Activated CD4-positive, alpha-beta T cell treated with anti-CD3 and anti-CD28 coated beads for 36 hours (primary cell): ENCODE measurements at regions of chr4 and their contacts with region 1.

Region 1: GRCh38 chr4:77075869-77076799 is at the start of gene CCNI:
- DNase-seq: peak; percentile 95
- ATAC-seq: peak; percentile 77
- H3K4me3 Mint-ChIP-seq: no peak within 1 kb of the TSS
- H3K27ac Mint-ChIP-seq: peak within 1 kb of the TSS; percentile 99
- H3K4me1 Mint-ChIP-seq: peaks cover 45% of the 10 kb centered on the region
- H3K27me3 Mint-ChIP-seq: no peaks in the 10 kb centered on the region
- total RNA-seq, gene CCNI: 226 to 230 TPM

Region 2: DNA sequence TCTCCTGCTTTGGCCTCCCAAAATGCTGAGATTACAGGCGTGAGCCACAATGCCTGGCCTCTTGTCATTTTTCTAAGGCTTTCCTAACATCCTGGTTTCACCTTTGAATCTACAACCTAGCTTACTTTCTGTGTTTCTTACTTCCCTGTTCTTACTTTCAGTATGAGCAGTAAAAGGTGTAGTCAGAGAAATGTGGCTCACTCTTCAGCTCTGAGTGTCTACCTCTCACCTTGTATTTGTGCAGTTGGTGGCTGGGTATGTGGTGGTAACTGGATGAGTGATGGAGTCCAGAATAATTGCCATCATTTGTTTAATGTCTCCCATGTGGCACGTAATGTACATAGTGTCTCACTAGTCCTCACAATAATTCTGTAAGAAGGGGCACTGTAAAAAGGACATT is 1021.1 kb before region 1 on chr4:
- CTCF ChIA-PET with region 1: no interaction called
- POLR2A ChIA-PET with region 1: no interaction called
- intact Hi-C with region 1: loop called in 1 of 2 experiments (anchors 5 kb)
- DNase-seq: peak; percentile 54
- ATAC-seq: peak; percentile 83
- H3K4me3 Mint-ChIP-seq: no peak overlapping the region
- H3K27ac Mint-ChIP-seq: no peak overlapping the region
- H3K4me1 Mint-ChIP-seq: peaks cover 44% of the 10 kb centered on the region
- H3K27me3 Mint-ChIP-seq: peaks cover 23% of the 10 kb centered on the region

Region 3: GRCh38 chr4:76949276-76950051 is 126.7 kb before region 1 on chr4 and contains the start of gene SEPTIN11:
- CTCF ChIA-PET with region 1: no interaction called
- POLR2A ChIA-PET with region 1: no interaction called
- intact Hi-C with region 1: loop called in 1 of 2 experiments (anchors 1 kb)
- DNase-seq: peak; percentile 86
- ATAC-seq: peak; percentile 72
- H3K4me3 Mint-ChIP-seq: peak within 1 kb of the TSS; percentile 83
- H3K27ac Mint-ChIP-seq: peak within 1 kb of the TSS; percentile 49
- H3K4me1 Mint-ChIP-seq: peaks cover 13% of the 10 kb centered on the region
- H3K27me3 Mint-ChIP-seq: peaks cover 22% of the 10 kb centered on the region
- total RNA-seq, gene SEPTIN11: 15.5 to 34.5 TPM

Region 4: DNA sequence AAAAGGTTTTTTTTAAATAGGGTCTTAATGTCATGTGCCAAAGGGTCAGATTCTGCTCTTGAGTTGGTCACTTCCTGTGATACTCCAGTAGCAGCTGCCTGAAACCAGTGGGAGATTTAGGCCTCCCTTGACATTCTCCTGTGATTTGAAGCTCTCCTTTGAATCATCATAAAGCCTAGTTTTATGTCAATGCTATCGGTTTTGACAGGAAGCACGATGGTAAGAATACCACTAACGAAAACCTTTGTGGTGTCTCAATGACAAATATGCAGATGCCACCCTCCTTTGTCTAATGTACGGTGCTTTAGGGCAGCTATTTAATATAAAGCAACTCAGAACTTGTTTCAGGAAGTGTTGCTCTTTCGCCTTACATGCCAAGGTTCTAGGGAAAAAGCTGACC is 44.6 kb before region 1 on chr4:
- CTCF ChIA-PET with region 1: no interaction called
- POLR2A ChIA-PET with region 1: no interaction called
- intact Hi-C with region 1: loop called in 1 of 2 experiments (anchors 1 kb)
- DNase-seq: peak; percentile 24
- ATAC-seq: peak; percentile 78
- H3K4me3 Mint-ChIP-seq: no peak overlapping the region
- H3K27ac Mint-ChIP-seq: no peak overlapping the region
- H3K4me1 Mint-ChIP-seq: peaks cover 44% of the 10 kb centered on the region
- H3K27me3 Mint-ChIP-seq: peaks cover 13% of the 10 kb centered on the region

Region 5: DNA sequence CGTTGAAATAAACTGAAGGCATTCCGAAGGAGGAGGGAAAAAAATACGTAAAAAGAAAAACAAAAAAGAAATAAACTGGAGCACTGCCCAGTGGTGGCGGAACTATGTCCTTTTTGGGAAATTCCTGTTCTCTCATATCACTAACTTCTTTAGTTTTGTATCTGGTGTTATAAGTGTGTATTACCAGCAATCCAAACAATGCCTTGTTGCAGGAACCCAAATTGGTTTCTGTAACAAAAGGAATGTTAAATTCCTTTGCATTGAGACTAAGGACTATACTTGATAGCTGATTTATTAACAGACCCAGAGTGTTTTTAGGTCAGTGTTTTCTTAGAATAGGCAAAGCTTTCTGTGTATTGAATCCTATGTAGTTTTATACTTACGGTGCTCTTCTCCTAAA is 87.5 kb after region 1 on chr4:
- CTCF ChIA-PET with region 1: no interaction called
- POLR2A ChIA-PET with region 1: no interaction called
- intact Hi-C with region 1: no loop called
- DNase-seq: no peak
- ATAC-seq: no peak
- H3K4me3 Mint-ChIP-seq: no peak overlapping the region
- H3K27ac Mint-ChIP-seq: no peak overlapping the region
- H3K4me1 Mint-ChIP-seq: peaks cover 7% of the 10 kb centered on the region
- H3K27me3 Mint-ChIP-seq: no peaks in the 10 kb centered on the region

Region 6: DNA sequence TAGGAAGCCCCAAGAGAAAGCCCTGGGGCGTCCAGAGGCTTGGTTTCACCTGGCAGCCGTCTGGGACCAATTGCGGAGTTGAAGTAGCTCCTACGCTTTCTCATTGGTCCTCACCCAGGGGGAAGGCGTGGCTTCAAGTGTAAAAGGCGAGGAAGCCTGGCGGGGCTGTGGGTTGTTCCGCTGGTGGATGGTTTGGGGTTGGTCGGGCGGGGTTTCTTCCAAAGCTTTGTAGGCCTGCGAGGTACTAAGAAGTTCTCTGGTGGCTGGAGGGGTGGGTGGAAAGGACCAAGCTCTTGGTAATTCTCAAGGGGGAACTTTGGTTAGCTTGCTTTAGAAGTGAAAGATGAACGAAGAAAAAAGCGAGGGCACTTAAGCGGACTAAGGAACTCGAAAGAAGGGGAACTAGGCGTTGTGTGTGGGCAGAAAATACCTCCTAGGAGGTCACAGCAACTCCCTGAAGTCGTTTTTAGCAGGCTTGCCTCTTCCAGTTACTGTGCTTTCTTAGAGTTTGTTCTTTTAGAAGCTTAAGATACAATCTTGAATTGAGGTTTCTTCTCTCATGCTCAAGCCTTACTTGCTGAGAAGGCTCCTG is 117.5 kb after region 1 on chr4:
- CTCF ChIA-PET with region 1: no interaction called
- POLR2A ChIA-PET with region 1: interaction called, 3 read pairs
- intact Hi-C with region 1: loop called in 1 of 2 experiments (anchors 10 kb)
- DNase-seq: peak; percentile 83
- ATAC-seq: peak; percentile 98
- H3K4me3 Mint-ChIP-seq: peak overlapping the region; percentile 60
- H3K27ac Mint-ChIP-seq: peak overlapping the region; percentile 44
- H3K4me1 Mint-ChIP-seq: peaks cover 25% of the 10 kb centered on the region
- H3K27me3 Mint-ChIP-seq: no peaks in the 10 kb centered on the region

Region 7: DNA sequence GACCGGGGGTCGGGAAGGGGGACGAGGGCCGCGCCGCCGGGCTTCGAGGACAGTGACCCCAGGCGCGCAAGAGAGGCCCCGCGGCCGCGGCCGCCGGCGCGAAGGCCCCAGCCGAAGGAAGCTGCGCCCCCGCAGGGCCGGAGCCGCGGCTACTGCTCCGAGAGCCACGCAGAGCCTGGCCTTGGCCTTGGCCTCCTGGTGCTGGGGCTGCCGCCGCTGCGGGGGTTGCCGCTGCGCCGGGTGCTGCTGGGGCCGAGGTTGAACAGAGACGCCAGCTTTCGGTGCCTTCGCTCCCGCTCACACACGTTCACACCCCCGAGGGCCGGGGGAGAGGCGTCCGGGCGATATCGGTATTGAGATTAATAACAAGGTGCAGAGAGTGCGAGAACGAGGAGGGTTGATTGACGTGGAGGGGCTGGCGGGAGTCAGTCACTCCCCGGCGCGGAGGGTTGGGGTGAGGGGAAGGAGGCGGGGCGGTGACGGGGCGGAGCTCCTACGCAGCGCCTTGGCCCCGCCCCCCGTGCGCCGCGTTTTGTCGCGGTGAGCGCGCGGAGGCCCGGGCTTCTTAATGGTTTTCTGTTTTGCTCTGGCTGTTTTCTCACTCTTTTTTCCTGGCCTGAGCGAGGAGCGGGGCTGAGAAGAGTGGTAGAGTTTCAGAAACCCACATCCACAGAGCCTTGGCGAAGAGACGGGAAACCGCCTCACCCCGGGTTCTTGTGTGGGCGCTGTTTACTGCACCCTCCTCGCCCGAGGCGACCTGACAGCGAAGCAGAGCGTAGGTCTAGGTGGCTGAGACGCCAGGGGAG is 743.9 kb after region 1 on chr4:
- CTCF ChIA-PET with region 1: no interaction called
- POLR2A ChIA-PET with region 1: no interaction called
- intact Hi-C with region 1: loop called in 1 of 2 experiments (anchors 1 kb)
- DNase-seq: peak; percentile 98
- ATAC-seq: peak; percentile 82
- H3K4me3 Mint-ChIP-seq: peak overlapping the region; percentile 99
- H3K27ac Mint-ChIP-seq: peak overlapping the region; percentile 97
- H3K4me1 Mint-ChIP-seq: peaks cover 46% of the 10 kb centered on the region
- H3K27me3 Mint-ChIP-seq: no peaks in the 10 kb centered on the region